Panc1 (cell line): ENCODE measurements at regions of chr5 and their contacts with region 1.

Region 1: DNA sequence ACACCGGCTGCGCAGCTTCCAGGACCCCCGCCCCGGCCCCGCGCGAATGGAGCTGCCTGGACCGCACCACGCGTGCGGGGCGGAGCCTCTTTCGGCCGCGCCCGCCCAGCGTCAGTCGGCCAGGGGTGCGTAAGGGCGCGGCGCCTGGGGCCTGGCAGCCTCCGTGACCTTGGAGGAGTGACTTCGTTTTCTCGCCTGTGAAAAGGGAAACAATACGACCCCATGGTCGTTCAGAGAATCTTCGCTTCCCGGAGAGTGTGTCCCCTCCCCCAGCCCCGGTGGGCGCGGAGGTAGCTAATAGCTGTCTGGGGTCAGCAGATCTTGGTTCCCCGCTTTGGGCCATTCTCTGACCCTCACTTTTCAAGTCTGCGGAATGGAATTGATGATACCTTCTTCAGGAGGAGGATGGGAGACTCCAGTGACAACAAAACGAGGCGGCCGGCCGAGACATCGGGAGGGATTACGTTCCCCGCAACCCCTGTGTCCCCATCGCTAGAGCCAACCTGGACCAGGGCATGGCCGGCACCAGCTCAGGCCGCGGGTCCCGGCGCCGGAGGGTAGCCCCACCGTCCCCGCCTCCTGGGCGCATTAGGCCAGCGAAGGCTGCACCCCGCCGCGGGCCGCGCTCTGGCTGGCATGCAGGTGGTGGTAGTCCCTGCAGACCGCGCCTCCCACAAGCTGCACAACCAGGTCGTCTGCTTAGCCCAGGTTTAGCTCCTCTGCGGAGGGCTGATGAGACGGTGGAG is 5.5 kb upstream of the CDHR2 start:
- DNase-seq: no peak
- ATAC-seq: peak; percentile 90
- H3K4me3 ChIP-seq: peak overlapping the region; percentile 65 to 89
- H3K27ac ChIP-seq: peak overlapping the region; percentile 90
- H3K4me1 ChIP-seq: peaks cover 39% of the 10 kb centered on the region
- H3K27me3 ChIP-seq: no peaks in the 10 kb centered on the region
- CTCF ChIP-seq: no peak

Region 2: DNA sequence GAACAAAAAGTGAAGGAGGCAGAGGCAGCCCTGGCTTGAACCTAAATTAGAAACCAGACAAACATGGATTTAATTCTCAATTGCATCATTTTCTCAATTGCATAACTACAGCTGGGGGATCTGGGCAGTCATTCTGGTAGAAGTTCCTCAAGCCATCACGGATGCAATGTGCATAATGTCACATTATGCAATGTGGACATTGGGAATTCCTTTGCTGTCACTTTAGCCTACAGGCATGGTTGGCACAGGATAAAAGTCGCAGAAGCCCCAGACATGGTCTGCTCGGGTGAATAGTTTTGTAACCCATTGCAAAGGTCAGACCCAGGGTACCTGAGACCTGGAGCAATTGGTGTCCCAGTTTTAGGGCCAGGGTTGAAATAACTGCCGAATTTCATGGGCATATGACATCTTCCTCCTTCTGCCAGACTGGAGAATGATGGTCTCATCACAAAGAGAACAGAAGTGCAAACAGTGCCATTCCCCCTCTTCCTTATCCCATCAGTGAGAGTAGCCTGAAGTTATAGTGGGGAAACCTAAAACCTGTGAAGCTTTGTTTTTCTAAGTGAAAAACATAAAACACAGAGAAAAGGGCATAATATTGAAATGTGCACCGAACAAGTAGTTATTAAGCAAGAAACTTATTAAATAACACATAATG is 1528.4 kb before region 1 on chr5:
- CTCF ChIA-PET with region 1: no interaction called
- POLR2A ChIA-PET with region 1: no interaction called
- in situ Hi-C with region 1: no loop called
- intact Hi-C with region 1: no loop called
- DNase-seq: no peak
- ATAC-seq: no peak
- H3K4me3 ChIP-seq: no peak overlapping the region
- H3K27ac ChIP-seq: no peak overlapping the region
- H3K4me1 ChIP-seq: no peaks in the 10 kb centered on the region
- H3K27me3 ChIP-seq: 0 out of 2 replicates have a peak, but pooled peaks cover 3% of the 10 kb centered on the region
- CTCF ChIP-seq: no peak

Region 3: GRCh38 chr5:175617447-175617846 is 926.2 kb before region 1 on chr5:
- CTCF ChIA-PET with region 1: no interaction called
- POLR2A ChIA-PET with region 1: interaction called, 11 read pairs
- in situ Hi-C with region 1: no loop called
- intact Hi-C with region 1: no loop called
- DNase-seq: no peak
- ATAC-seq: 0 out of 2 replicates have a peak, but pooled peaks have one; percentile 60
- H3K4me3 ChIP-seq: no peak overlapping the region
- H3K27ac ChIP-seq: no peak overlapping the region
- H3K4me1 ChIP-seq: no peaks in the 10 kb centered on the region
- H3K27me3 ChIP-seq: no peaks in the 10 kb centered on the region
- CTCF ChIP-seq: no peak

Region 4: DNA sequence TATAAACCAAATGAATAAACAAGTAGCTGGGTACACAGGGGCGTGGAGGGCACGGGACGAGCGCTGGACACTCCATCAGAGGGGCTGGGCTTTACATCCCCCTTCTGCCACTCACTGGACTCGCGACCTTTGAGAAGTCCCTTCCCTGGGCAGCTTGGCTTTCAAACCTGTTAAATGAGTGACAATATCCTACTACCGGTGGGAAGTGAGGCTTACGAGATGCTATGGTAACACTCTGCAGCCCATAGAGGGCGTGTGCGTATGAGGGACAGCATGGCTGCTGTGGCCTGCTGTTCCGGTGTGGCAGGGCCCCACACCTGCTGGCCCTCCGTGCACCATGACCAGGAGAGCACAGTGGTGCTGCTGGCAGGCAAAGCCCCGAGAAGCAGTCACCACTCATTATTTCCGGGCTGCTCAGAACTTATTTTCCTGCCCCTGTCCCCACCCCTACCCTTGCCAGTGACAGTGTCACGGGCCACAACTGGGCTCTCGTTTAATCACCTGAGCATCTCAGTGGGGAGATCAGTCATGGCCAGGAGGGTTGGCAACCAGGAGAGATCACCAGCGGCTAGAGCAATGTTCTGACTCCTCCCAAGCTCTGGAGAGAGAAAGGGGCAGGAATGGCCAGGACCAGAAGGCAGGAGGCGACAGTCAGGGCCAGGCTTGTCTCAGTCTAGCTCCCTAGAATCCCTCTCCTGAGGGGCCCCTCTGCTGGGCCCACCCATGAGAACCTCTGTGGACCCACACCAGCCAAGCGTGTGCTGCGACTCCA is 137.8 kb before region 1 on chr5:
- CTCF ChIA-PET with region 1: no interaction called
- POLR2A ChIA-PET with region 1: no interaction called
- in situ Hi-C with region 1: no loop called
- intact Hi-C with region 1: no loop called
- DNase-seq: no peak
- ATAC-seq: peak; percentile 58; the same call in 1 of the 2 replicates
- H3K4me3 ChIP-seq: no peak overlapping the region
- H3K27ac ChIP-seq: no peak overlapping the region
- H3K4me1 ChIP-seq: no peaks in the 10 kb centered on the region
- H3K27me3 ChIP-seq: no peaks in the 10 kb centered on the region
- CTCF ChIP-seq: no peak

Region 5: DNA sequence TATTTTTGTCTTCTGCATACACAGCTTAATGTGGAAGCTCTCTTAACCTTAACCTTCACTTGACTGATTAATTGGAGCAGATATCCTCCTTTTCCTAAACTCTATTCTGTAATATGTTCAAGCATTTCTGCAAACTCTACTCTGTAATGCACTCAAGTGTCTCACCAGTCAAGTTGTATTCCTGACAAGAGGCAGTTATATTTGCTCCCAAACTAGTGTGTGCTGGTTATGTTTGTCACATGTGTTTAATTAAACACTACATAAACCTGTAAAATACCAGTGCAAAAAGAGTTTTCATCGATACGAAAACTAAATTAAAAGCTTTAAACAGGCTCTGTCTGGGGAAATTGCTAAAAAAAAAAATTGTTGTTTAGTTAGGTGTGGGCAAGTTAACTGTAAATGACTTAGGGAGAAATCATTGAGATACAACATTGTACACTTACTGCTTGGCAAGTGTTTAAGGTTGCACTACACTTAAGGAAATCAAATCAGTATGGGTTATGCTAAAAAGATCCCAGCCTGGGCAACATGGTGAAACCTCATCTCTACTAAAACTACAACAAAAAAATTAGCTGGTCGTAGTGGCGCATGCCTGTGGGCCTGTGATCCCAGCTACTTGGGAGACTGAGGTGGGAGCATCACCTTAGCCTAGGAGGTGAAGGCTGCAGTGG is 88.7 kb before region 1 on chr5:
- CTCF ChIA-PET with region 1: interaction called, 6 read pairs
- POLR2A ChIA-PET with region 1: interaction called, 12 read pairs
- in situ Hi-C with region 1: no loop called
- intact Hi-C with region 1: no loop called
- DNase-seq: no peak
- ATAC-seq: no peak
- H3K4me3 ChIP-seq: no peak overlapping the region
- H3K27ac ChIP-seq: no peak overlapping the region
- H3K4me1 ChIP-seq: peaks cover 8% of the 10 kb centered on the region
- H3K27me3 ChIP-seq: no peaks in the 10 kb centered on the region
- CTCF ChIP-seq: no peak

Region 6: DNA sequence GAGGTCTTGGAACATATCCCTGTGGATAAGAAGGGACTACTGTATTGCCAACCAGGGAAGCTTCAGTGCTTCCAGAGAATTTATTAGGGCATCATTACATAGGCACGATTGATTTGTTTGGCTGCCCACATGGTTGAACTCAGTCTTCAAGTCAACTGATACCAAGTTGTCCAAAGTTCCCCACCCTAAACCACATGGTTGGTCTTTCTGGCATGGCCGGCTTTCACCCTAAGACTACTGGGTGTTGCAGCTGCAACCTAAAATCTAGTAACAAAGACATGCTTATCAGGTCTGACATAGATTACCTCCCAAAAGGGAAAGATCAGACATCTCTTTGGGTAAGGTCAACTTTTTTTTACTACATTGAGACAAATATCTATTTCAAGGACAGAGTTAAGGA is 58.4 kb before region 1 on chr5:
- CTCF ChIA-PET with region 1: interaction called, 16 read pairs
- POLR2A ChIA-PET with region 1: no interaction called
- in situ Hi-C with region 1: no loop called
- intact Hi-C with region 1: no loop called
- DNase-seq: no peak
- ATAC-seq: no peak
- H3K4me3 ChIP-seq: no peak overlapping the region
- H3K27ac ChIP-seq: no peak overlapping the region
- H3K4me1 ChIP-seq: peaks cover under 1% of the 10 kb centered on the region; the same call in 1 of the 2 replicates
- H3K27me3 ChIP-seq: no peaks in the 10 kb centered on the region
- CTCF ChIP-seq: no peak

Region 7: GRCh38 chr5:176530983-176531821 is 12.4 kb before region 1 on chr5:
- CTCF ChIA-PET with region 1: interaction called, 13 read pairs
- POLR2A ChIA-PET with region 1: no interaction called
- in situ Hi-C with region 1: no loop called
- intact Hi-C with region 1: no loop called
- DNase-seq: no peak
- ATAC-seq: peak; percentile 26; the same call in 1 of the 2 replicates
- H3K4me3 ChIP-seq: no peak overlapping the region
- H3K27ac ChIP-seq: peak overlapping the region; percentile 39; the same call in 1 of the 2 replicates
- H3K4me1 ChIP-seq: peaks cover 45% of the 10 kb centered on the region
- H3K27me3 ChIP-seq: no peaks in the 10 kb centered on the region
- CTCF ChIP-seq: no peak